GM12878 (cell line): ENCODE measurements at regions of chr6 and their contacts with region 1.

Region 1: DNA sequence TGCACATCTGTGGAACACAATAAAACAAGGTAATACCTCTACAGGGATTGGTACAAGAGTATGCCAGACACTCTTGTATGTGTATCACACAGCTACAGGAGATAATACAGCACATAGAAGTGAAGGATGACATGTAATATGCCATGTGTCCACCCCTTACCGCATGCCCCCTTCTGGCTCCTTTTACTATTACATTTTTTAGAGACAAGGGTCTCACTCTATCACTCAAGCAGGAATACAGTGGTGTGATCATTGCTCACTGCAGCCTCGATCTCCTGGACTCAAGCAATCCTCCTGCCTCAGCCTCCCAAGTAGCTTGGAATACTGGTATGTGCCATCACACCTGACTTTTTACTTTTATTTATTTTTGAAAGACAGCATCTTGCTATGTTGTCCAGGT is 4.2 kb upstream of the NCR3 start:
- DNase-seq: no peak
- ATAC-seq: peak; percentile 84
- H3K4me3 ChIP-seq: no peak overlapping the region
- H3K27ac ChIP-seq: no peak overlapping the region
- H3K4me1 ChIP-seq: peaks cover 18% of the 10 kb centered on the region
- H3K27me3 ChIP-seq: no peaks in the 10 kb centered on the region
- CTCF ChIP-seq: peak; percentile 45 to 64 (median 56)
- EP300 ChIP-seq: no peak
- POLR2A ChIP-seq: no peak
- RAD21 ChIP-seq: peak; percentile 74

Region 2: GRCh38 chr6:31285486-31285885 is 311.5 kb before region 1 on chr6:
- CTCF ChIA-PET with region 1: no interaction called
- POLR2A ChIA-PET with region 1: no interaction called
- RAD21 ChIA-PET with region 1: no interaction called
- SMC1A ChIA-PET with region 1: no interaction called
- in situ Hi-C with region 1: no loop called
- intact Hi-C with region 1: no loop called
- DNase-seq: no peak
- ATAC-seq: no peak
- H3K4me3 ChIP-seq: no peak overlapping the region
- H3K27ac ChIP-seq: no peak overlapping the region
- H3K4me1 ChIP-seq: no peaks in the 10 kb centered on the region
- H3K27me3 ChIP-seq: no peaks in the 10 kb centered on the region
- CTCF ChIP-seq: no peak
- EP300 ChIP-seq: no peak
- POLR2A ChIP-seq: no peak
- RAD21 ChIP-seq: no peak

Region 3: GRCh38 chr6:31493875-31494694 is 102.9 kb before region 1 on chr6:
- CTCF ChIA-PET with region 1: interaction called, 81 read pairs
- POLR2A ChIA-PET with region 1: interaction called, 7 read pairs
- RAD21 ChIA-PET with region 1: interaction called, 66 read pairs
- SMC1A ChIA-PET with region 1: interaction called, 9 read pairs
- in situ Hi-C with region 1: loop called (anchors 5 kb)
- intact Hi-C with region 1: loop called (anchors 2 kb)
- DNase-seq: peak; percentile 34
- ATAC-seq: peak; percentile 73
- H3K4me3 ChIP-seq: peak overlapping the region; percentile 76
- H3K27ac ChIP-seq: peak overlapping the region; percentile 65
- H3K4me1 ChIP-seq: 0 out of 2 replicates have a peak, but pooled peaks cover 2% of the 10 kb centered on the region
- H3K27me3 ChIP-seq: no peaks in the 10 kb centered on the region
- CTCF ChIP-seq: peak; percentile 72 to 94 (median 85)
- EP300 ChIP-seq: no peak
- POLR2A ChIP-seq: 0 out of 2 replicates have a peak, but pooled peaks have one; percentile 23
- RAD21 ChIP-seq: peak; percentile 72

Region 4: DNA sequence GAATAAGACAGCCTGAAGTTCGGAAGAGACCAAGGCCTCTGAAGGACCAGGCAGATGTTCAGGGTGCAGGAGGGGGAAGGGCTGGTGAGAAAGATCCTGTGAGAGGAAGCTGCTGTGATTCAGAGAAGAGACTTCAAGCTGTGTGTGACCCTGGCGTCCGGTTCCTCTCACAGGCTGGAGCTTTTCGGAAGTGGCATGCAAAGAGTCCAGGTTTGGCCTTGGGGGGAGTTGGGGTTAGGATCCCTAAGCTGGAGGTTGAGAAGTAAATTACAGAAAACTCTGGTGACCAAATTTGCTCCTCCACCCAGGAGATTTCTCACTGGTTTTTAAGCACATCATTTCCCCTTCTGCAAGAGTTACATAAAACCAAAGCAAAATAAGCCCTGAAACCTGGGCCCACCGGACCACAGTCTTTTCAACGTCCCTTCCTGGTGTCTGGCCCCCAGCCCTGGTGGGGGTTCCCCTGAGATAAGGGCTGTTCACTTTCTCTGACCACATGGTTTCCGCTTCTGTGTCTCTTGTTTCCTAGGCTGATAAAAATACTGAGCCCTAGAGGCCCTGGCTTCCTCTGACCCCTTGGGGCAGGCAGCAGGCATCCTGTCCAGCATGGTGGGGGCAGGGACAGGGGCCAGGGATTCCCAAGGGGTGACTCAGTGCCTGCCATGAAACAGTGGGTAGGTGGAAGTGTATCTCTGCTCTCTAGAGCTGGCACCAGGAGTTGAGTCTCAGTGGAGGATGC is 36.9 kb before region 1 on chr6:
- CTCF ChIA-PET with region 1: interaction called, 2,098 read pairs
- POLR2A ChIA-PET with region 1: interaction called, 18 read pairs
- RAD21 ChIA-PET with region 1: interaction called, 92 read pairs
- SMC1A ChIA-PET with region 1: interaction called, 1,989 read pairs
- in situ Hi-C with region 1: no loop called
- intact Hi-C with region 1: no loop called
- DNase-seq: peak; percentile 88
- ATAC-seq: peak; percentile 77
- H3K4me3 ChIP-seq: peak overlapping the region; percentile 55; the same call in 1 of the 2 replicates
- H3K27ac ChIP-seq: peak overlapping the region; percentile 99
- H3K4me1 ChIP-seq: peaks cover 79% of the 10 kb centered on the region
- H3K27me3 ChIP-seq: no peaks in the 10 kb centered on the region
- CTCF ChIP-seq: 0 out of 6 replicates have a peak, but pooled peaks of 1 of the 3 experiments have one; percentile 2
- EP300 ChIP-seq: 0 out of 4 replicates have a peak, but pooled peaks of 1 of the 2 experiments have one; percentile 42
- POLR2A ChIP-seq: no peak; the same call in 1 of the 2 replicates
- RAD21 ChIP-seq: peak; percentile 1; the same call in 1 of the 2 replicates

Region 5: GRCh38 chr6:31580807-31581433 is 16.1 kb before region 1 on chr6:
- CTCF ChIA-PET with region 1: interaction called, 789 read pairs
- POLR2A ChIA-PET with region 1: interaction called, 282 read pairs
- RAD21 ChIA-PET with region 1: interaction called, 466 read pairs
- SMC1A ChIA-PET with region 1: interaction called, 523 read pairs
- in situ Hi-C with region 1: no loop called
- intact Hi-C with region 1: loop called (anchors 1 kb)
- DNase-seq: no peak
- ATAC-seq: peak; percentile 83
- H3K4me3 ChIP-seq: peak overlapping the region; percentile 93
- H3K27ac ChIP-seq: peak overlapping the region; percentile 91
- H3K4me1 ChIP-seq: peaks cover 41% of the 10 kb centered on the region
- H3K27me3 ChIP-seq: no peaks in the 10 kb centered on the region
- CTCF ChIP-seq: peak; percentile 96 to 97 (median 97)
- EP300 ChIP-seq: no peak
- POLR2A ChIP-seq: peak; percentile 87
- RAD21 ChIP-seq: peak; percentile 67